ENCODE measurements at regions of chr1 and their contacts with region 1.

Region 1: DNA sequence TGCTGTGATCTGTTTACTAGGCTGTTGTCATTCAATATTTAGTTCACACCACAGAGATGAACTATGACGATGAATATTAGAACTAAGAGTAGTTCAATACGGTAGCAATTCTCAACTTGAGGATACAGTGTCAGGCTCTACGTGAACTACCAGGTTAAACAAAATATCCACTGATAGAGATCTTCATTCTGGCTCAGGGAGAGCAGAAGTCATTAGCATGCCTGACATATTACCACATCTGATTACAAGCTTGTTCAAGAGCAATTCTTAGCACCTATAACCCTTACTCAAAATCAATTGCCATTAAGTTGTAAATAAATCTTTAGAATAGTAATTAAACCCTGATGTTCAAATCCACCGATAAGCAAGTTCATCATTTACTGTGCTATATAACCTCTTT is 207.2 kb downstream of the CHRM3 start:
- DNase-seq: no peak
- H3K4me3 ChIP-seq: no peak overlapping the region
- H3K4me3 Mint-ChIP-seq: no peak overlapping the region
- H3K27ac Mint-ChIP-seq: no peak overlapping the region
- H3K4me1 ChIP-seq: no peaks in the 10 kb centered on the region
- H3K4me1 Mint-ChIP-seq: no peaks in the 10 kb centered on the region
- H3K27me3 ChIP-seq: no peaks in the 10 kb centered on the region
- H3K27me3 Mint-ChIP-seq: no peaks in the 10 kb centered on the region
- CTCF ChIP-seq: no peak

Region 2: GRCh38 chr1:240435968-240436566 is 842.5 kb after region 1 on chr1:
- CTCF ChIA-PET with region 1: interaction called, 10 read pairs
- POLR2A ChIA-PET with region 1: no interaction called
- intact Hi-C with region 1: no loop called
- DNase-seq: no peak
- H3K4me3 ChIP-seq: no peak overlapping the region
- H3K4me3 Mint-ChIP-seq: no peak overlapping the region
- H3K27ac Mint-ChIP-seq: no peak overlapping the region
- H3K4me1 ChIP-seq: no peaks in the 10 kb centered on the region
- H3K4me1 Mint-ChIP-seq: no peaks in the 10 kb centered on the region
- H3K27me3 ChIP-seq: no peaks in the 10 kb centered on the region
- H3K27me3 Mint-ChIP-seq: peaks cover 4% of the 10 kb centered on the region
- CTCF ChIP-seq: no peak

Measured in Caco-2 (cell line).